KBM-7 (cell line): ENCODE measurements at regions of chr3 and their contacts with region 1.

Region 1: DNA sequence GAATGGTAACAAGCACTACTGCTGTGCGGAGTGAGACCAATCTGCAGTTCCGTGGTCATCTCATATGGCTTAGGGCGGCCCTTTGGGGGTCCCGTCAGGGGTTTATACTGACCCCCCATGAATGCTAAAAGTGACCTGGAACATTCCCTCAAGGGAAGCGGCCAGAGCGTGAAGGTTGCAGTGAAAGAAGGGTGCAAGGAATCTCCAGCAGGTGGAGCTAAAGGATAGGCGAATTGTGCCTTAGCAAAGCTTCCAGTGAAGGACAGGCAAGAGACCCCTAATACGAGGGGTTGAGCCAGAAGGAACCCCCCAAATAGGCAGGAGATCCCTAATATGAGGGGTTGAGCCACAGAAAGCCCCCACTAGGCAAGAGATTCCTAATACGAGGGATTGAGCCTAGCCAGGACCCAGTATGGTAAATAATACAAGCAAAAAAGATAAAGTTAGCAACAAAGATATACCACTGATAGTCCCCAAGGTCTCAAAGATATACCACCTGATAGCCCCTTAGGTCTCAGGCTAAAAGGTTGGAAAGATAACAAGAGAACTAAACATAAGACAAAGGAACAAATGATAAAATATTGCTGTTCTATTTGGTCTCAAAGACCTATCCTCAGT is 32.8 kb downstream of the ZNF589 start:
- DNase-seq: peak; percentile 80

Region 2: GRCh38 chr3:47652142-47652541 is 621.6 kb before region 1 on chr3:
- in situ Hi-C with region 1: no loop called
- DNase-seq: no peak

Region 3: DNA sequence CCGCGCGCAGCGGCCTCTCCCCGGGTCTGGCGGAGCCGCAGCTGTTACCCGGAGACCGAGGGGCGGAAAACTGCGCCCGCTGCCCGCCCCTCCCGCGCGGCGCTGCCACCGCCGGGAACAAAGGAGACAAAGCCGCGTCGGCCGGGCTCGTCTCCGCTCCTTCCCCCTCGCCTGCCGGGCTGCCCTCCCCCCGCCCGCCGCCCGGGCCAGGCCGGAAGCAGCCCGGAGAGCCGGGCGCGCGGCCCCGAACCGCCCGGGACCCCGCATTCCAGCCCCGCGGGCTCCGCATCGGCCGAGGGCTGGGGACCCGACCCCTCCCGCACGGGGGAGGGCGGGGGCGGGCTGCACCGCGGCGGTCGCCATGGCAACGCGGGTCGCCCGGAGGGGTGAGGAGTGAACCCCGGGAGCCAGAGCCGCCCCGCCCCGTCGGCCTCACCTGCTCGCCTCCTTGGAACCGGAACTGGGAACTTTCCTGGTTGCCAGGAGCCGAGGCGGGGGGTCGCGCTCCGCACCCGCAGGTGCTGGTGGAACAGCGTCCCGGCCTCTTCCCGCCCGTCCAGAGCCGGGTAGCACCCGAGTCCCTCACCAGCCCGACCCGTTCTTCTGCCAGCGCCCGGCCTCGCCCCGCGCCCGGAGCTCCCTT is 155.7 kb after region 1 on chr3:
- in situ Hi-C with region 1: loop called (anchors 10 kb)
- DNase-seq: no peak

Region 4: GRCh38 chr3:48650723-48651122 is 377.0 kb after region 1 on chr3:
- in situ Hi-C with region 1: no loop called
- DNase-seq: no peak